Right cardiac atrium (tissue), 5 donors: ENCODE measurements at regions of chr11 and their contacts with region 1.

Region 1: DNA sequence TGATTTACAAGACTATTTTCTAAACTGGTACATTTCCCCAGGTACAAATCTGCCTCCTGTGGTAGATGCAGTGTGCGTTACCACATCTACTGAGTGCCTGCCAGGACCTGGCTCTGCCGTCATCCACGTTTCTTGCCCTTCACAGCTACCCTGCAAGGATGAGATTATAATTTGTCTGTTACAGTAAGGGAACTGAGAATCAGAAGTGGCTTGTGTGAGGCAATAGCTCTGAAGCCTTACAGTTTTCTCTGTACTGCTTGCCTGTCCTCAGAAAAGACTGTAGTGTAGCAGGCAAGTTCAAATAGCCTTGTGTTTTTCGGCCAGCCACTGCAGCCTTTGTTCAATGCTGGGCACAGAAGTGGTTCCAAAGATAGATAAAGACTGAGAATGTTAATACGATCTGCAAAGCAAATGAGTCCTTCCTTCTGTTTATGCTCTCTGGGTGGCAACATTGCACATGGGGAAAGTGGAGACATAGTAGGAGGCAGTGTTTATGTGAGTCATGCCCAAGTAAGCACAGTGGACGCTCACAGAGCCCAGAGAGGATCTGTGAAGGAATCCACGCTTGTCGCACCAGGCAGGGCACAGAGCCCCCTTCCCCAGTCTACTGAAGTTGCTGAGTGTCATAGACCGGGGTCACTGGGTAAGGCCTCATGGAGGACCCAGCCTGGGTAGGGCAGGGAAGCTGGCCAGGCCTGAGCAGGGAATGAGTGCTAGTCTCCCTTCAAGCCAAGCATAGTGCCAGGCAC is 49.1 kb downstream of the MICAL2 start:
- DNase-seq: peak in 1 of 3 donors; percentile 60
- ATAC-seq: peak; percentile 35 to 62
- H3K4me3 ChIP-seq: no peak overlapping the region
- H3K27ac ChIP-seq: peak overlapping the region; percentile 96
- H3K4me1 ChIP-seq: peaks cover 32% of the 10 kb centered on the region
- H3K27me3 ChIP-seq: no peaks in the 10 kb centered on the region

Region 2: GRCh38 chr11:11757909-11758308 is 401.6 kb before region 1 on chr11:
- intact Hi-C with region 1: no loop called
- DNase-seq: no peak
- ATAC-seq: no peak
- H3K4me3 ChIP-seq: no peak overlapping the region
- H3K27ac ChIP-seq: no peak overlapping the region
- H3K4me1 ChIP-seq: no peaks in the 10 kb centered on the region
- H3K27me3 ChIP-seq: no peaks in the 10 kb centered on the region

Region 3: GRCh38 chr11:12224537-12224893 is 65.0 kb after region 1 on chr11:
- intact Hi-C with region 1: loop called in 2 of 4 experiments (anchors 10 kb)
- DNase-seq: peak; percentile 77 to 91 (median 90)
- ATAC-seq: peak; percentile 8 to 43
- H3K4me3 ChIP-seq: no peak overlapping the region
- H3K27ac ChIP-seq: peak overlapping the region; percentile 65
- H3K4me1 ChIP-seq: peaks cover 18% of the 10 kb centered on the region
- H3K27me3 ChIP-seq: no peaks in the 10 kb centered on the region